PC-9 (cell line): ENCODE measurements at regions of chrX and their contacts with region 1.

Region 1: DNA sequence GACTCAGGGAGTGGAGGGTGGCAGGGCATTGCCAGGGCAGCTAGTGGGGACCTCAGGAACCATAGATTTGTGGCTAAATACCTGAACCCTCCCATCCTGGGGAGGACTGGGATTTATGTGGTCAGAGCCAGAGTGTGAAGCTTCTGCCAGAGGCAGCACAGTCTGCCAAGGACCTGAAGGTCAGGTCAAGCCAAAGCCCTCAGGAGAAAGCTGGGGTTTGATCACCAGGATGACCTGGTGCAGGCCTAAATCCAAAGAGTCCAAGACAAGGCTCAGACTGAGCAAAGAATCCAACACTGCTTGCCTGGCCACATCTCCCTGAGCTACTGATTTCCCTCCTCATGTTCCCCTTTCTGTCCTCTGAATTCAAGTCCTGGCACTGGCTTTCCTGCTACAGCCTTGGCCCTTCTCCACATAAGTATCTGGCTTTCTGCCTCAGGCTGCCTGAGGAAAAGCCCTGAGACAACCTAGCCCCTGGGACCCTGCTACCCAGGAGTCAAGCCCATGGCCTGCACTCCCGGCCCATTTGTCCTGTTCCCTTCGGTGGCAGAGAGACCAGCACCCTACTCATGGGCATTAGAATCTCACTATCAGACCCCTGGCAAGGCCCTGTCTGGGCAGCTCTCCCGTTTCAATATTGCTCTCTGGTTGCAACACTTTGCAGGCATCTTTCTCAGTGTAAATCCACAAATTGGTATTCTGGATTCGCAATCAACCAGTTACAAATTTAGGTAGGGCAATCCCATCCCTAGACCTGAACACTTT is 39.3 kb upstream of the SLC25A43 start:
- DNase-seq: no peak
- H3K4me3 ChIP-seq: no peak overlapping the region
- H3K27ac ChIP-seq: no peak overlapping the region
- H3K4me1 ChIP-seq: no peaks in the 10 kb centered on the region
- H3K27me3 ChIP-seq: no peaks in the 10 kb centered on the region
- CTCF ChIP-seq: no peak

Region 2: GRCh38 chrX:118853596-118853995 is 506.2 kb before region 1 on chrX:
- CTCF ChIA-PET with region 1: no interaction called
- POLR2A ChIA-PET with region 1: no interaction called
- intact Hi-C with region 1: no loop called
- DNase-seq: no peak
- H3K4me3 ChIP-seq: no peak overlapping the region
- H3K27ac ChIP-seq: no peak overlapping the region
- H3K4me1 ChIP-seq: no peaks in the 10 kb centered on the region
- H3K27me3 ChIP-seq: no peaks in the 10 kb centered on the region
- CTCF ChIP-seq: no peak

Region 3: GRCh38 chrX:119382606-119383005 is 22.8 kb after region 1 on chrX:
- CTCF ChIA-PET with region 1: interaction called, 4 read pairs
- POLR2A ChIA-PET with region 1: interaction called, 11 read pairs
- intact Hi-C with region 1: no loop called
- DNase-seq: no peak
- H3K4me3 ChIP-seq: no peak overlapping the region
- H3K27ac ChIP-seq: no peak overlapping the region
- H3K4me1 ChIP-seq: no peaks in the 10 kb centered on the region
- H3K27me3 ChIP-seq: no peaks in the 10 kb centered on the region
- CTCF ChIP-seq: no peak

Region 4: DNA sequence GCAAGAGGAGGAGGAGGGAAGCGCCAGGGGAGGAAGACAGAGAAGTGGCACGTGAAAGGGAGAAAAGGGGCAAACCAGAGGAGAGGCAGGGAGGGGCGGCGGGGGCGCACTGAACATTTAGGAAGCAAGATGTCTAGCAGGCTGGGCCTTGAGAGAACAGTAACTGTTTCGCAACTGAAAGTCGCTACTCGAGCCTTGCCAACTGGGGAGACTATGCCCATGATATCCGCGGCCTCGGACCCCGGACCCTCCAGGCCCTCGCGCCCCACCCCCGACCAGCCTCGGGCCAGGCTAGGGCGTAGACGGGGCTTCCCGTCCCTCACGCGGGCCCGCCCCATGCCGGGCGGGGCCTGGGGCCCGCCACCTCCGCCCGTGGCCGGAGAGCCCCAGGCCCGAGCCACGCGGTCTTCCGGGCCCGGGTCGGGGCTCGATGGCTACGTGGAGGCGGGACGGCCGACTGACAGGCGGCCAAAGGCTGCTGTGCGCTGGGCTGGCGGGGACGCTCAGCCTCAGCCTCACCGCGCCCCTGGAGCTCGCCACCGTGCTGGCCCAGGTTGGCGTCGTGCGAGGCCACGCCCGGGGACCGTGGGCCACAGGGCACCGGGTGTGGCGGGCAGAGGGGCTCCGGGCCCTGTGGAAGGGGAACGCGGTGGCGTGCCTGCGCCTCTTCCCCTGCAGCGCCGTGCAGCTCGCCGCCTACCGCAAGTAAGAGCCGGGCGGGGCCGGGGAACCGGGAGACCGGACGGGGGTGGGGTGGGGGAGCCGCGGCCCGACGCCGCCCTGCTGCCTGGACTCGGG is 39.4 kb after region 1 on chrX and contains the start of gene SLC25A43:
- CTCF ChIA-PET with region 1: no interaction called
- POLR2A ChIA-PET with region 1: interaction called, 22 read pairs
- intact Hi-C with region 1: no loop called
- DNase-seq: peak in 1 of 2 experiments; percentile 50
- H3K4me3 ChIP-seq: peak within 1 kb of the TSS; percentile 94
- H3K27ac ChIP-seq: 0 out of 2 replicates have a peak within 1 kb of the TSS, but pooled peaks have one; percentile 38
- H3K4me1 ChIP-seq: peaks cover 39% of the 10 kb centered on the region
- H3K27me3 ChIP-seq: no peaks in the 10 kb centered on the region
- CTCF ChIP-seq: no peak
- total RNA-seq, gene SLC25A43: 38.4 and 42.3 TPM in 2 replicates

Region 5: GRCh38 chrX:119708936-119709335 is 349.1 kb after region 1 on chrX:
- CTCF ChIA-PET with region 1: no interaction called
- POLR2A ChIA-PET with region 1: no interaction called
- intact Hi-C with region 1: no loop called
- DNase-seq: no peak
- H3K4me3 ChIP-seq: no peak overlapping the region
- H3K27ac ChIP-seq: no peak overlapping the region
- H3K4me1 ChIP-seq: no peaks in the 10 kb centered on the region
- H3K27me3 ChIP-seq: no peaks in the 10 kb centered on the region
- CTCF ChIP-seq: no peak

Region 6: DNA sequence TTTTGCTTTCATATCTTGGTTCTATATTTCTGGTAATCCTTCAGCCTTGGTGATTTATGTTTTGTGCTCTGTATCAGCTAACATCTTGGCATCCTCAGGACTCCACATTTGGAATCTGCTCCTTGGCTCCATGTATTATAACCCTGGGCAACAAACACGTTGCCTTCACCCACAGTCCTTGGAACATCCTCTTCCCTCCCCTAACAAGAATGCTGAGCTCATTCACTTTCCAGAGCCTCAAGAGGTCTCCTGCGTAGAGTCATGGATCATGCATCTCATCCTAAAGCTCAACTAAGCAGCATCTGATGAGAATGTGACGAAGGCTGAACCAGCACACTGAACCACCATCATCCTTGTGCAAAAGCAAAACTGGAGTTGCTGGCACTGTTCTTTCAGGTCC is 1330.5 kb after region 1 on chrX:
- CTCF ChIA-PET with region 1: no interaction called
- POLR2A ChIA-PET with region 1: no interaction called
- intact Hi-C with region 1: no loop called
- DNase-seq: no peak
- H3K4me3 ChIP-seq: no peak overlapping the region
- H3K27ac ChIP-seq: no peak overlapping the region
- H3K4me1 ChIP-seq: no peaks in the 10 kb centered on the region
- H3K27me3 ChIP-seq: no peaks in the 10 kb centered on the region
- CTCF ChIP-seq: no peak